Ovary (tissue), 10 donors: ENCODE measurements at regions of chr16 and their contacts with region 1.

Region 1: DNA sequence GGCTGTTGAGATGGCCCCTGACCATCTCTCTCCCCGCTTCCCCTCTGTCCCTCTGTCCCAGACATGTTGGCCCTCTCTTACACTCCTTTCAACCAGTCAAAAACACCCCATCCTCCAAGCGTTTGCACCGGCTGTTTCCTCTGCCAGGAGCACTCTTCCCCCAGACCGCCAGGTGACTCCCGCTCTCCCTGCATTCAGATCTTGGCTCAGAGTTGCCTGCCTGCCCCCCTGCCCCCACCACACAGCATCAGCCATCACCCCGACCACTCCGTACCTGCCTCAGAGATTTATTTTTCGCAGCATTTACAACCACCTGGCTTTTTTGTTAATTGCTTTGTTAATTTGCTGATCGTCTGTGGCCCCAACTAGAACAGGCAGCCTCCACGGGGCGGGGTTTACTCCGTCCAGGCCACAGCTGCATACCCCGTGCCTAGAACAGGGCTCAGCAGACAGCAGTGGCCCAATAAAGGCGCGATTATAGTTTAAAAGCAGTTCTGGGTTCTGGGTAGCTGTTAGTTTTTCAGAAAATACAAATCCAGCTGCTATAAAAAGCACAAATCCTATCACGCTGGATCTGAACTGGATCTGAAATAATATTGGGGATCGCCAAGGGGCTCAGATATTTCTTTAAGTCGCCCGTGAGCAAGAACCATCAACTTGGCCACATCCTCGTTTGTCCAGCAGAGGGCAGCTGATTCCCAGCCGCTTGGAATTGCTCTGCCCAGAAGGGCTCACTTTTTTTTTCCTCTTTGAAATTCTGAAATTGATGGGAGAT is 173.6 kb downstream of the IRF8 start:
- DNase-seq: peak; percentile 15 to 69 (median 42)
- H3K4me3 ChIP-seq: no peak overlapping the region
- H3K27ac ChIP-seq: no peak overlapping the region
- H3K4me1 ChIP-seq: no peaks in the 10 kb centered on the region
- H3K27me3 ChIP-seq: no peaks in the 10 kb centered on the region
- CTCF ChIP-seq: no peak
- EP300 ChIP-seq: no peak
- POLR2A ChIP-seq: no peak

Region 2: GRCh38 chr16:86044241-86044671 is 28.3 kb before region 1 on chr16:
- intact Hi-C with region 1: no loop called
- DNase-seq: no peak
- H3K4me3 ChIP-seq: no peak overlapping the region
- H3K27ac ChIP-seq: no peak overlapping the region
- H3K4me1 ChIP-seq: no peaks in the 10 kb centered on the region
- H3K27me3 ChIP-seq: no peaks in the 10 kb centered on the region
- CTCF ChIP-seq: no peak
- EP300 ChIP-seq: no peak
- POLR2A ChIP-seq: no peak

Region 3: DNA sequence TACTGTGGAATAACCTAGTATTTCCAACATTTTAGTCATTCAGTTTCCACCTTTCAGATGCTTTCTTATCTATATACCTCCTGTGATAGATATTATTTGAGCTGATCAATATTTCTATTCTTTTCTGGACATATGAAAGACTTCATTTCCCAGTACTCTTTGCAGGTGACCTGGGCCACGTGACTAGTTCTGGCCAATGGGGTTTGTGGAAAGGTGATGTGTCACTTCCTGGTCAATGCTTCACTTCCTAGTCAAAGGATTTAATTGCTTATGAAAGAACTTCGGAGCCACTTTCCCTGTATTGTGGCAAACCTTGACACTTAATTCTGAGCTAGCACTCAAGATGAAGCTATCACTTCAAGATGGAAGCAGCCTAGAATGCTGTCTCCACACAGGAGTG is 188.9 kb after region 1 on chr16:
- intact Hi-C with region 1: no loop called
- DNase-seq: no peak
- H3K4me3 ChIP-seq: no peak overlapping the region
- H3K27ac ChIP-seq: no peak overlapping the region
- H3K4me1 ChIP-seq: no peaks in the 10 kb centered on the region
- H3K27me3 ChIP-seq: no peaks in the 10 kb centered on the region
- CTCF ChIP-seq: no peak
- EP300 ChIP-seq: no peak
- POLR2A ChIP-seq: no peak

Region 4: DNA sequence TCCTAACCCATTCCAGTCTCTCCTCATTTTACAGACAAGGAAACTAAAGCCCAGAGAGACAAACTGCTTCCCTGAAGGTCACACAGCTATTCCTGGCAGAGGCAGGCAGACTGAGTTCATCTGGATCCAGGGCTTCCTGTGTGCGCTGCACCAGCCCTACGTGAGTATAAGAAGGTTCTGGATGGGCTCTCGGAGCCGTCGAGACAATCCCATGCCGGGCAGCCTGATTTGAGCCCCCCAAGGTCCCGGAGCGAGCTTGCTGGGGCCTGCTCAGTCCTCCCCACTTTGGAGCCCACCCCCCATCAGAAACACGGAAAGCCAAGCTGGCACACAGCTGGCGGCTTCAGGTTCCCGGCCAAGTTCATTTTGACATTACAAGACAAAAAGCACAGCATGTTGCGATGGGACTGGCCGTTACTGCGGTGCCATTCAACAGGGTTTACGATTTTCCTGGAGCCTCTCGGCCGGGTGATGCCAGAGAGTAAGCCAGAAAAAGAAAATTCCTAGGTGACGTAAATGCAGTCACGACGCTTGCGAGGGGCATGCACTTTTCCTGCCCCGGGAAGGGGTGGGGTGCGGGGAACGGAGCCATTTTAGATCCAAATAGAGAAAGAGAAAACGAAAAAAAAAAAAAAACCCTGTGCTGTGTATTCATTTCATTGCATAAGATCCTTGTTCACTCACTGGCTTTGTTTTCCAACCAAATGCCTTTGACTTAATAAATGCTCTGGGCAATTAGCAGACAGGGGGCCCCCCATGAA is 270.7 kb after region 1 on chr16:
- intact Hi-C with region 1: no loop called
- DNase-seq: peak in 1 of 5 donors; percentile 49
- H3K4me3 ChIP-seq: no peak overlapping the region
- H3K27ac ChIP-seq: no peak overlapping the region
- H3K4me1 ChIP-seq: no peaks in the 10 kb centered on the region
- H3K27me3 ChIP-seq: no peaks in the 10 kb centered on the region
- CTCF ChIP-seq: no peak
- EP300 ChIP-seq: no peak
- POLR2A ChIP-seq: no peak

Region 5: GRCh38 chr16:86519649-86520316 is 447.3 kb after region 1 on chr16:
- intact Hi-C with region 1: loop called (anchors 5 kb)
- DNase-seq: peak; percentile 24 to 71 (median 60)
- H3K4me3 ChIP-seq: no peak overlapping the region
- H3K27ac ChIP-seq: no peak overlapping the region
- H3K4me1 ChIP-seq: peaks cover 2% of the 10 kb centered on the region
- H3K27me3 ChIP-seq: no peaks in the 10 kb centered on the region
- CTCF ChIP-seq: peak; percentile 55 to 70 (median 61)
- EP300 ChIP-seq: no peak
- POLR2A ChIP-seq: no peak